H1 (cell line): ENCODE measurements at regions of chr16 and their contacts with region 1.

Region 1: GRCh38 chr16:14586637-14587305 is 43.3 kb downstream of the PARN start:
- DNase-seq: no peak
- H3K4me3 ChIP-seq: no peak overlapping the region
- H3K27ac ChIP-seq: no peak overlapping the region
- H3K4me1 ChIP-seq: no peaks in the 10 kb centered on the region
- H3K27me3 ChIP-seq: no peaks in the 10 kb centered on the region
- CTCF ChIP-seq: no peak
- EP300 ChIP-seq: no peak
- POLR2A ChIP-seq: no peak
- RAD21 ChIP-seq: no peak

Region 2: DNA sequence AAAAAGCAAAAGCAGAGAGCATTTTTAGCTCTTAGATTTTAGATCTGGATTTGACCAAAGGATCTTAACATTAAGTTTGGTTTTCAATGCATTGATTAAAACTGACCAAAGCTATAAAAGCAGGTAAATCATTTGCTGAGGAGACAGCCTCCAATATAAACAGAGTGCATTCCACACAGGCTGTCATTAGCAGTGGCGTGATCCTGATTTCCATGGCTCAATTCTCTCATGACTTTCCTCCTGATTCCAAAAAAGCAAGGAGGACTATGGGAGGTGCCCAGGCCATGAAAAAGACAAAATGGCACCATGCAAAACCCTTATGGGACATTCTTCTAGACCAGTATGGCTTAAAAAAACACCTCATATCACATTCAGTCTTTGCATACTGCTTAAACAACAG is 10.2 kb before region 1 on chr16:
- CTCF ChIA-PET with region 1: interaction called, 3 read pairs
- POLR2A ChIA-PET with region 1: interaction called, 10 read pairs
- DNase-seq: no peak
- H3K4me3 ChIP-seq: no peak overlapping the region
- H3K27ac ChIP-seq: no peak overlapping the region
- H3K4me1 ChIP-seq: no peaks in the 10 kb centered on the region; a peak in 2 of 7 replicates
- H3K27me3 ChIP-seq: no peaks in the 10 kb centered on the region
- CTCF ChIP-seq: no peak
- EP300 ChIP-seq: no peak
- POLR2A ChIP-seq: no peak
- RAD21 ChIP-seq: no peak